Activated CD4-positive, alpha-beta T cell treated with anti-CD3 and anti-CD28 coated beads, Interleukin-2, amount 10 ng/mL, durations not matched to agents 7 days and 5 days (primary cell): ENCODE measurements at regions of chr19 and their contacts with region 1.

Region 1: DNA sequence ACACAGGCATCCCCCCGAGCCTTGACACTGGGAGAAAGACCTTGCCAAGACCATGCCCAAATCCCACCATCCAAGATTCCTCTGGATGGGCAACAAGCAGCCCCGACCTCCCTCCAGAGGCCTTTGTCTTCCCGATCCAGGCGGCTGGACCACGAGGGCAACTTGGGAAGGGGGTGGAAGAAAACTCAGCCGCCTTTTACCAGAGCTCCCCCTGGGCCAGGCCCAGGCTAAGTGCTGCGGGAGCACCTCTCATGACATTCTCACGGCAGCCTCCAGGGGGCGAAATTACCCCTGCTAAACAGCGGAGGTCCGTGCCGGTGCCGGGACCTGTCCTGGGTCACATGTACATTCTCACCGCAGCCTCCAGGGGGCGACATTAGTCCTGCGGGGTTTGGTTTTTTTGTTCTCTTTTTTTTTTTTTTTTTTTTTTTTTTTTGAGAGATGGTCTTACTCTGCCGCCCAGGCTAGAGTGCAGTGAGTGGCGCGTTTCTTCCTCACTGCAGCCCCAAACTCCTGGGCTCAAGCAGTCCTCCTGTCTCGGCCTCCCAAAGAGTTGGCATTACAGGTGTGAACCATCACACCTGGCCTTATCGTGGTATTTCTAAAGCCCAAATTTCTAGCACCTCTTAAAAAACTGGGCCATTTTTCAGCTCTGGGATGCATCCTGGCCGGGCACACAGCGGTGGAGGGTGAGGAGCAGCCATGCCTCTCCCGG is 2.1 kb upstream of the RSPH6A start:
- DNase-seq: peak; percentile 97
- H3K4me3 Mint-ChIP-seq: no peak overlapping the region
- H3K27ac Mint-ChIP-seq: no peak overlapping the region
- H3K4me1 Mint-ChIP-seq: peaks cover 7% of the 10 kb centered on the region
- H3K27me3 Mint-ChIP-seq: no peaks in the 10 kb centered on the region

Region 2: GRCh38 chr19:45717166-45717982 is 99.8 kb before region 1 on chr19:
- CTCF ChIA-PET with region 1: no interaction called
- POLR2A ChIA-PET with region 1: no interaction called
- DNase-seq: peak; percentile 99
- H3K4me3 Mint-ChIP-seq: peak overlapping the region; percentile 92
- H3K27ac Mint-ChIP-seq: peak overlapping the region; percentile 92
- H3K4me1 Mint-ChIP-seq: peaks cover 42% of the 10 kb centered on the region
- H3K27me3 Mint-ChIP-seq: no peaks in the 10 kb centered on the region

Region 3: GRCh38 chr19:45798995-45799517 is 18.1 kb before region 1 on chr19:
- CTCF ChIA-PET with region 1: interaction called, 16 read pairs
- POLR2A ChIA-PET with region 1: no interaction called
- DNase-seq: peak; percentile 56
- H3K4me3 Mint-ChIP-seq: no peak overlapping the region
- H3K27ac Mint-ChIP-seq: no peak overlapping the region
- H3K4me1 Mint-ChIP-seq: peaks cover 7% of the 10 kb centered on the region
- H3K27me3 Mint-ChIP-seq: peaks cover 50% of the 10 kb centered on the region

Region 4: GRCh38 chr19:45804140-45804958 is 12.8 kb before region 1 on chr19:
- CTCF ChIA-PET with region 1: interaction called, 16 read pairs
- POLR2A ChIA-PET with region 1: no interaction called
- DNase-seq: no peak
- H3K4me3 Mint-ChIP-seq: no peak overlapping the region
- H3K27ac Mint-ChIP-seq: no peak overlapping the region
- H3K4me1 Mint-ChIP-seq: peaks cover 1% of the 10 kb centered on the region
- H3K27me3 Mint-ChIP-seq: peaks cover 25% of the 10 kb centered on the region

Region 5: DNA sequence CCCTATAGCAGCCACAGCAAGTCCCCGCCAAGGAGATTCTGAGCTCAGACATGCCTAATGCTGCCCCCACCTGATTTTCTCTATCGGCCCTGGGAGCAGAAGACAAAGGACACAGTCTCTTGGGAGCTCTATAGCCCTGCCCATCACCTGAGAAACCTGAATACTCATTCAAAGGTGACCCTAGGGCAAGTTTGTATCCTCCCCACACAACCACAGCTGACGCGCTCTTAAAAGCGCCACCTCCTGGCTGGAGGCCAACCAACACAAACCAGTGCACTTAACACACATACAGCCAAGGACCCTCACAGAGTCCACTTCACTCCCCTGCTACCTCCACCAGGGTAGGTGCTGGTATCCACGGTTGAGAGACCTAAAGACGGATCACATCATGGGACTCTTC is 232.4 kb after region 1 on chr19:
- CTCF ChIA-PET with region 1: no interaction called
- POLR2A ChIA-PET with region 1: no interaction called
- DNase-seq: no peak
- H3K4me3 Mint-ChIP-seq: no peak overlapping the region
- H3K27ac Mint-ChIP-seq: no peak overlapping the region
- H3K4me1 Mint-ChIP-seq: no peaks in the 10 kb centered on the region
- H3K27me3 Mint-ChIP-seq: peaks cover 76% of the 10 kb centered on the region